ENCODE measurements at regions of chr5 and their contacts with region 1.

Region 1: GRCh38 chr5:142748568-142749249 is 21.5 kb upstream of the ARHGAP26 start:
- DNase-seq: peak in 1 of 2 experiments; percentile 44
- ATAC-seq: peak; percentile 60 to 82; a peak in 4 of 6 replicates
- H3K4me3 ChIP-seq: no peak overlapping the region
- H3K27ac ChIP-seq: no peak overlapping the region
- H3K4me1 ChIP-seq: peaks cover 10% of the 10 kb centered on the region; the same call in 2 of the 3 replicates
- CTCF ChIP-seq: peak; percentile 73
- EP300 ChIP-seq: no peak
- POLR2A ChIP-seq: no peak
- RAD21 ChIP-seq: peak; percentile 90 to 91

Region 2: GRCh38 chr5:142726188-142726731 is 22.4 kb before region 1 on chr5:
- CTCF ChIA-PET with region 1: interaction called, 163 read pairs
- POLR2A ChIA-PET with region 1: no interaction called
- DNase-seq: no peak
- ATAC-seq: no peak
- H3K4me3 ChIP-seq: no peak overlapping the region
- H3K27ac ChIP-seq: peak overlapping the region in 1 of 2 experiments; percentile 46; a peak in 2 of 6 replicates
- H3K4me1 ChIP-seq: peaks cover 10% of the 10 kb centered on the region; the same call in 2 of the 3 replicates
- CTCF ChIP-seq: no peak
- EP300 ChIP-seq: no peak
- POLR2A ChIP-seq: no peak
- RAD21 ChIP-seq: no peak

Region 3: DNA sequence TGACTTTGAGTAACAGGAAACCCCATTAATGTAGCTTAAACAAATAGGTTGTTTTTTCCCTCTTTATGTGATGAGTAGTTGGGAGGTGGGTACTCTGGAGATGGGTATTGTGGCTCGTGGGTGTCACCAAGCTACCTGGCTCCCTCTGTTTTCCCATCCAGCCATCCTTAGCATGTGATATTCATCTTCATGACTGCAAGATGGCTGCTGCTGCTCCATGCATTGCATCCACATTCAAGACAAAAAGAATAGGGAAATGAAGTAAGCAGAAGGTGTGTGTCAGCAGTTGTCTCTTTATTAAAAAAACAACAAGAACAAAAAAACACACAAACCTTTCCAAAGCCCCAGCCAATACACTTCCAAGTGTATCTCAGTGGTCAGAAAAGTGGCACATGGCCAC is 15.0 kb after region 1 on chr5:
- CTCF ChIA-PET with region 1: interaction called, 16 read pairs
- POLR2A ChIA-PET with region 1: no interaction called
- DNase-seq: no peak
- ATAC-seq: no peak
- H3K4me3 ChIP-seq: no peak overlapping the region
- H3K27ac ChIP-seq: no peak overlapping the region
- H3K4me1 ChIP-seq: no peaks in the 10 kb centered on the region
- CTCF ChIP-seq: no peak
- EP300 ChIP-seq: no peak
- POLR2A ChIP-seq: no peak
- RAD21 ChIP-seq: no peak